Ovary (tissue), 10 donors: ENCODE measurements at regions of chr2 and their contacts with region 1.

Region 1: DNA sequence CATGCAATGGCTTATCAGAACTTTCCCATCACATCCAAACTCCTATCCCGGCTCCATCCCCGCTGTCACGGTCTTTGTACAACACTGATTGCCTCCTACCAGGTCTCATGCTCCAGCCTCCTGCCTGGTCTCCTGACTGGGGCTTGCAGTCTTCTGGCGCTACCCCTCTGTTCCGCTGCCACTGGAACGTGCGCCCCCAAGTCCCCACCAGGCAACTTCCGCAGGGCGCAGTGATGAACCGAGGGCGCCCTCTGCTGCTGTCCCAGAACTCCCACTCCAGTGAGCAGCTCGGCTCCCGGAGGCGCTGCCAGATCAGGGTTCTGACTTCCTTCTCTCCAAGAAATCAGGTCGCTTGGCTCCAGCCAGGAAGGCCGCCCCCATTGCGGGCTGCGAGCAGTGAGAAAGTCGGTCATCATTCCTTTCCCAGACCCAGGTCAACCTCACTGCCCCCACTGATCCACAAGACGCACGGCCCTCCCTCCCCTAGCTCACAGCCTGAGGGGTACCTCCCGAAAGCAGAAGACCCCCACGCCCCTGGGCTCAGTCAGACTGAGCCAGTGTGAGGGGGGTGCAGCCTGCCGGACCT is 43.9 kb upstream of the RAB11FIP5 start:
- DNase-seq: peak in 4 of 5 donors; percentile 32 to 67 (median 50)
- H3K4me3 ChIP-seq: no peak overlapping the region
- H3K27ac ChIP-seq: no peak overlapping the region
- H3K4me1 ChIP-seq: no peaks in the 10 kb centered on the region
- H3K27me3 ChIP-seq: no peaks in the 10 kb centered on the region
- CTCF ChIP-seq: no peak
- EP300 ChIP-seq: no peak
- POLR2A ChIP-seq: no peak

Region 2: GRCh38 chr2:72887754-72888437 is 268.7 kb before region 1 on chr2:
- intact Hi-C with region 1: loop called in 2 of 4 experiments (anchors 5 kb)
- DNase-seq: peak; percentile 87 to 93 (median 90)
- H3K4me3 ChIP-seq: peak overlapping the region; percentile 47
- H3K27ac ChIP-seq: peak overlapping the region; percentile 74 to 79
- H3K4me1 ChIP-seq: peaks cover 7% of the 10 kb centered on the region
- H3K27me3 ChIP-seq: no peaks in the 10 kb centered on the region
- CTCF ChIP-seq: peak; percentile 68 to 80 (median 78)
- EP300 ChIP-seq: no peak
- POLR2A ChIP-seq: no peak

Region 3: DNA sequence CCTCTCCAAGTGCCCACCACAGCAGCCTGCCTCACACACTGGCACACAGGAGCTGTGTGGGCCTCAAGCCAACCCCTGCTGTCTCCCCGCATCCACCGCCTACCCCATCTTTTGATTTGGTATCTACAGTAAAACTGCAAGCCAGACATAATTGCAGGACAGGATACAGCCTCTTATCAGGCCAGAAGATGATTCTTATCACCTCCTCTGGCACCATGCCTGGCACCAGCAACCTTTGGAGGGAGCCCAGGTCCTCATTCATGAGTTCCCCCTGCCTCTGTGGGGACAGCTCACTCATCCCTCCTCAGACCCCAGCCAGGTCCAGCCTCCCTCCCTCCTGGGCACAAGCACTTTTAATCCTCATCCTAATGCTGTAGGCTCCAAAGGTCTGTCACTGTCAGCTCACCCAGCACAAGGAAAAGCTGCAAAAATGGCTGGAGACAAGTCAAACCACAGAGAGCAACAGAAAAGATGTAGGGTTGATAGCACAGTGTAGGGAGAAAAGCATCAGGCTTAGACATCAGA is 53.6 kb before region 1 on chr2:
- intact Hi-C with region 1: loop called in 2 of 4 experiments (anchors 5 to 10 kb)
- DNase-seq: peak in 1 of 5 donors; percentile 13
- H3K4me3 ChIP-seq: no peak overlapping the region
- H3K27ac ChIP-seq: no peak overlapping the region
- H3K4me1 ChIP-seq: peaks cover 9% of the 10 kb centered on the region
- H3K27me3 ChIP-seq: no peaks in the 10 kb centered on the region
- CTCF ChIP-seq: no peak
- EP300 ChIP-seq: no peak
- POLR2A ChIP-seq: no peak